ENCODE measurements at regions of chr17 and their contacts with region 1.

Region 1: DNA sequence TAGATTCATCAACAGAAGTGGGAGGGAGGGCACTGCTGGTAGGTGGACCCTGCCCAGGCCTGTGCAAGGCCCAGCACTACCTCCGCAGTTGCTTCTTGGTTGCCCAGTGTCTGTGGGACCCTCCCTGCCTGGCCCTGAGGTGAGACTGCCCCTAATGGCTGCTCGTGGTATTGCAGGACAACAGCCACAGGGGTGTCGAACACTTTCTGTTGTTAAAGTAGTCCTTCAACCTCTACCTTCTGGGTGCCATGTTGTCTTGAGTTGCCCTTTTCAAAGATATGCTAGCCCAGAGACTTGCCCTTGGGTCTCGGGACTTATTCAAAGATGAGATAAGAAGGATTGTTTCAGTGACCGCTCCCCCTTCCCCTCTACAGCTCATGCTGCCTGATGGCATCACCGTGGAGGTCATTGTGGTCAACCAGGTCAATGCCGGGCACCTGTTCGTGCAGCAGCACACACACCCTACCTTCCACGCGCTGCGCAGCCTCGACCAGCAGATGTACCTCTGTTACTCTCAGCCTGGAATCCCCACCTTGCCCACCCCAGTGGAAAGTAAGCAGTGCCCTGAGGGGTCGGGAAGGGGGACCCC is 29.1 kb downstream of the AKAP1 start:
- DNase-seq: no peak
- ATAC-seq: no peak

Region 2: GRCh38 chr17:57009737-57010445 is 104.3 kb before region 1 on chr17:
- intact Hi-C with region 1: loop called (anchors 5 kb)
- DNase-seq: no peak
- ATAC-seq: peak; percentile 54

Region 3: DNA sequence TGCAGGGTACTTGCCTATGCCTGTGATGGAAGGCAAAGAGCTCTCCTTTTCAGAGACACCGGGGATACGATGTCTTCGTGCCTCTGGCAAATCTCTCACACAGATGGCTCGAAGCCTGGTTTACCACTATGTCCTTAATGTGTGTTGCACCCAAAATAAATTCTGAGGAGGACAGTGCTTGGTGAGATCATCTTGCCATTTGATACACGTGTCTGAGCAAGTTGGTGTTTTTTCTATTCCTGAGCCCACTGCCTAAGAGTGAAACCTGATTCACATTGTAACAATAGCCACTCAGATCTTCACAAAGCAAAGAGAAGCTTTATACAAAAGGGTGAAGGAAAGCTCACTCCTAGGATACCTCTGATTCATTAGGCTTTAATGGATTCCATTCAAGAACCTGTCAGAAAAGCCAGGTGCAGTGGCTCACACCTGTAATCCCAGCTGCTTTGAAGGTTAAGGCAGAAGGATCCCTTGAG is 62.3 kb before region 1 on chr17:
- intact Hi-C with region 1: loop called (anchors 5 kb)
- DNase-seq: no peak
- ATAC-seq: peak; percentile 30

Region 4: DNA sequence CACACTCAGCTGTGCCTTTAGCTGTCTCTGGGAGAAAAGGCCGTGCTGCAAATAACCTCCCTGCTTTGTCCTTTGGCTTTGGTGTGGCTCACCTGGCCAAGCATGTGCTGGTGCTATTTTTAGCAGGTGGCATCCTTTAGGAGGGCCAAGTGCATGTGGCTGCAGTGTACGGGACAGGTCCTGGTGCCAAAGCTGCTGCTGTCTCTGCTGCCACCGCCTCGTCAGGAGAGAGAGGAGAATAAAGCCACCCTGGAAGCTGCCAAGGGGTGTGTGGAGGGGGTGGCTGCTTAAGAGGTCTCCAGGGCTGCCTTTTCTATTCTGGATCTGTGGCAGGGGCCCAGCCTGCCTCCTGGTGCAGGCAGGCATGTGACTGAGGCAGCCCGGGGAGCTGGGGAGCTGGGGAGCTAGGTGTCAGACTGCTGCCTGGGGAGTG is 23.0 kb before region 1 on chr17:
- intact Hi-C with region 1: loop called (anchors 2 kb)
- DNase-seq: peak; percentile 83
- ATAC-seq: peak; percentile 92

Region 5: GRCh38 chr17:57747221-57748017 is 633.2 kb after region 1 on chr17:
- intact Hi-C with region 1: no loop called
- DNase-seq: no peak
- ATAC-seq: no peak

Region 6: GRCh38 chr17:57995076-57995956 is 881.1 kb after region 1 on chr17:
- intact Hi-C with region 1: loop called (anchors 10 kb)
- DNase-seq: no peak
- ATAC-seq: peak; percentile 93